ENCODE measurements at regions of chr6 and their contacts with region 1.

Region 1: GRCh38 chr6:139588076-139588639 is 213.7 kb upstream of the CITED2 start:
- DNase-seq: peak; percentile 30
- ATAC-seq: peak; percentile 74
- H3K4me3 ChIP-seq: peak overlapping the region in 2 of 3 experiments; percentile 11 to 14; a peak in 2 of 6 replicates
- H3K27ac ChIP-seq: peak overlapping the region; percentile 24
- H3K4me1 ChIP-seq: peaks cover 65% of the 10 kb centered on the region
- H3K27me3 ChIP-seq: no peaks in the 10 kb centered on the region
- CTCF ChIP-seq: no peak
- EP300 ChIP-seq: no peak
- POLR2A ChIP-seq: no peak
- RAD21 ChIP-seq: no peak

Region 2: GRCh38 chr6:139540276-139540675 is 47.9 kb before region 1 on chr6:
- CTCF ChIA-PET with region 1: no interaction called
- POLR2A ChIA-PET with region 1: no interaction called
- in situ Hi-C with region 1: no loop called
- intact Hi-C with region 1: loop called (anchors 2 kb)
- DNase-seq: no peak
- ATAC-seq: peak; percentile 37; the same call in 2 of the 3 replicates
- H3K4me3 ChIP-seq: peak overlapping the region in 2 of 3 experiments; percentile 8; a peak in 1 of 6 replicates
- H3K27ac ChIP-seq: no peak overlapping the region
- H3K4me1 ChIP-seq: peaks cover 41% of the 10 kb centered on the region
- H3K27me3 ChIP-seq: no peaks in the 10 kb centered on the region
- CTCF ChIP-seq: no peak
- EP300 ChIP-seq: no peak
- POLR2A ChIP-seq: no peak
- RAD21 ChIP-seq: no peak